ENCODE measurements at regions of chr11 and their contacts with region 1.

Region 1: DNA sequence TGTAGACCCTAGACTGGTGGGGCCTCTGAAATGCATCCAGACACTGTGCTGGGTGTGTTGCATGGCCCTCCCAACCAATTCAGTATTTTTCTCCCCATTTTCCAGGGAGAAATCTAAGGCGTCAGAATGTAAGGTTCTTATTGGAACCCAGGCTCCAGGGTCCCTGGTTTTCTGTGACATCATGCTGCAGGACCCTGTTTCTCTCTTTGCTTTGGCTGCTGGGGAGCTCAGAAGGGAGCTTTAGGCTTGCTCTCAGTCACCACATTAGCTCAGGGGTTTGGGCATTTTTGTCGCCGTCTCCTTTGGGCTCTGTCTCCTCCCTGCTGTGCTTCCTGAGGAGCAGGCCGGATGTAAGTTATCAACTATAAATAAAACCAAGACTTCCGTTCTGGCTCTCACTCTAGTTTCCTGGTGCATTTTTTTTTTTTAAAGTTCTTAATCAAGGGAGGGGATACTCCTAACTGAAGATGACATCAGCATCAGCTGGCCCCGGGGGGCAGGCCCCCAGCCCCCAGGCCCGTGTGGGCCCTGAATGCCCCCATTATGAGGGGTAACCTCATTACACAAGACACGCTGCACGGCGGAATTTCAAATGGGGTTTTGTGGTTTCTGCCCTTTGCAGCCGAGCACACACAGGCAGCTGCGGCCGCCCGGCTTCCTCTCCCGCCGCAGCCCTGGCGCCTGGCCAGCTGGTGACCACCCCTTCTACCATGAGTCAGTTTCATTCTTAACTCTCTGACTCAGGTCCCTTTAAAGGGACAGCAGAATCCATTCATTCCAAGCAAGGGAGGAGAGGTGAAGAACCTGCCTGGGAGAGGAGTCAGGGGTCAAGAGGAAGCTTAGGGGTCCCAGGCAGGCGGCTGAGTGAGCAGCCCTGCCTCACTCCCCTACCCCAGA is 3.2 kb downstream of the MYEOV start:
- DNase-seq: peak; percentile 96 to 98 (median 97)
- ATAC-seq: peak; percentile 83 to 87
- H3K4me3 ChIP-seq: no peak overlapping the region
- H3K27ac ChIP-seq: peak overlapping the region; percentile 82
- H3K4me1 ChIP-seq: peaks cover 17% of the 10 kb centered on the region
- H3K27me3 ChIP-seq: no peaks in the 10 kb centered on the region

Region 2: DNA sequence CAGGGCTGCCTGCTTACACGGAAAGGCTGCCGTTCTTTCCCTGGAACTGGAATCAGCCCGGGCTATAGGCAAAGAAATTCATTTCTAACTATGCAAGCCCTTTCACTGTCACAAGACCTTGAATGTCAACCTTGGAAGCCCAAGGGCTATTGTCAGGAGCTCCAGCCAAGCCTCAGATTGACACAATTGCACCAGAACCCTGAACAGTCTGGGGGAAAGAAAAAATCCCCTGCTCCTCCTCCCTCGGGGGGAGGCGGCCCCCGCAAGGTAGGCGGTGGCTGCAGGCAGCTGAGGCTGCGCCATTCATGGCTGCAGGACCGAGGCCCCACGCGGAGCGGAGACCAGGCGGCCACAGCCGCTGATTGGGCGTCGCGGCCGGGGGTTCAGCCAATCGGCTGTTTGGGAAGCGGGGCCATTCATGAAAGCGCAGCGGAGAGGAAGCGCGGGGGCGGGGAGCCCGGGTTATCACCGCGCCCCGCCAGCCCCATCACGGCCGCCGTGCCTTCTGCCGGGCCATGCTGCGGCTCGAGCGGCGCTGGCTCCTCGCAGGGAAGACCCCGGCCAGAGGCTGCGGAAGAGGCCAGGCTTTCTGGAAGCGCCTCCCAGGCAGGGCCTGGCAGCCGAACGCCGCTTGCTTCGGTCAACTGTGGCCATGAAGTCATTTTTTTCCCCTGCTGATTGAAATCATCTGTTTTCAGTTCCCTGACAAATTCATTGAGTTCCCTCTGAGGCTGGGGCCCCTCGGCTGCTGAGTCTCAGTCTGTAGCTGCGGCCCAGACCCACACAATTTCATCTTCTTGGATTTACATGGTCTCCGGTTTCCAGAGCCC is 146.2 kb after region 1 on chr11:
- intact Hi-C with region 1: loop called in 3 of 4 experiments (anchors 10 kb)
- DNase-seq: peak; percentile 95 to 97 (median 97)
- ATAC-seq: peak; percentile 95
- H3K4me3 ChIP-seq: peak overlapping the region; percentile 42
- H3K27ac ChIP-seq: peak overlapping the region; percentile 84
- H3K4me1 ChIP-seq: peaks cover 4% of the 10 kb centered on the region
- H3K27me3 ChIP-seq: no peaks in the 10 kb centered on the region